PC-9 (cell line): ENCODE measurements at regions of chr17 and their contacts with region 1.

Region 1: DNA sequence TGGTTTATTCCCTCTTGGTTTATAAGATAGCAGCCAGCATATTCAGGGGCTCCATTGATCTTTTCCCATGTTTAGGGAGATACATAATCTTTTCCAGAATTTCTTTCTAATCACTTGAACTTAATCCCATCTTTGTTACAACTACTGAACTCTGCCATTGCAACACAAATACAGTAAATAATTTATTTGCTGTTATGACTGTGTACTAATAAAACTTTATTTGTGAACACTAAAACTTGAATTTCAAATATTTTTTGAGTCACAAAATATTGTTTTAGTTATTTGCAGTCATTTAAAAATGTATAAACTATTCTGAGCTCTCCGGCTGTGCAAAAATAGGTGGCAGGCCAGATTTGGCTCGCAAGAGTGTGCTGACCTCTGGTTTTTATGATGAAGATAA is 86.6 kb downstream of the TANC2 start:
- DNase-seq: no peak
- H3K4me3 ChIP-seq: no peak overlapping the region
- H3K27ac ChIP-seq: no peak overlapping the region
- H3K4me1 ChIP-seq: no peaks in the 10 kb centered on the region
- H3K27me3 ChIP-seq: no peaks in the 10 kb centered on the region
- CTCF ChIP-seq: no peak

Region 2: GRCh38 chr17:62892870-62893338 is 159.7 kb before region 1 on chr17:
- CTCF ChIA-PET with region 1: no interaction called
- POLR2A ChIA-PET with region 1: interaction called, 17 read pairs
- intact Hi-C with region 1: no loop called
- DNase-seq: peak; percentile 70 to 95
- H3K4me3 ChIP-seq: no peak overlapping the region; the same call in 1 of the 2 replicates
- H3K27ac ChIP-seq: peak overlapping the region; percentile 81
- H3K4me1 ChIP-seq: peaks cover 46% of the 10 kb centered on the region
- H3K27me3 ChIP-seq: no peaks in the 10 kb centered on the region
- CTCF ChIP-seq: no peak

Region 3: GRCh38 chr17:63140255-63140654 is 87.6 kb after region 1 on chr17:
- CTCF ChIA-PET with region 1: no interaction called
- POLR2A ChIA-PET with region 1: no interaction called
- intact Hi-C with region 1: no loop called
- DNase-seq: no peak
- H3K4me3 ChIP-seq: no peak overlapping the region
- H3K27ac ChIP-seq: no peak overlapping the region
- H3K4me1 ChIP-seq: no peaks in the 10 kb centered on the region
- H3K27me3 ChIP-seq: no peaks in the 10 kb centered on the region
- CTCF ChIP-seq: no peak

Region 4: GRCh38 chr17:63150994-63151464 is 98.4 kb after region 1 on chr17:
- CTCF ChIA-PET with region 1: no interaction called
- POLR2A ChIA-PET with region 1: no interaction called
- intact Hi-C with region 1: no loop called
- DNase-seq: no peak
- H3K4me3 ChIP-seq: no peak overlapping the region
- H3K27ac ChIP-seq: no peak overlapping the region
- H3K4me1 ChIP-seq: no peaks in the 10 kb centered on the region
- H3K27me3 ChIP-seq: no peaks in the 10 kb centered on the region
- CTCF ChIP-seq: no peak